Left ventricle myocardium superior (tissue), 1 donor: ENCODE measurements at regions of chr11 and their contacts with region 1.

Region 1: DNA sequence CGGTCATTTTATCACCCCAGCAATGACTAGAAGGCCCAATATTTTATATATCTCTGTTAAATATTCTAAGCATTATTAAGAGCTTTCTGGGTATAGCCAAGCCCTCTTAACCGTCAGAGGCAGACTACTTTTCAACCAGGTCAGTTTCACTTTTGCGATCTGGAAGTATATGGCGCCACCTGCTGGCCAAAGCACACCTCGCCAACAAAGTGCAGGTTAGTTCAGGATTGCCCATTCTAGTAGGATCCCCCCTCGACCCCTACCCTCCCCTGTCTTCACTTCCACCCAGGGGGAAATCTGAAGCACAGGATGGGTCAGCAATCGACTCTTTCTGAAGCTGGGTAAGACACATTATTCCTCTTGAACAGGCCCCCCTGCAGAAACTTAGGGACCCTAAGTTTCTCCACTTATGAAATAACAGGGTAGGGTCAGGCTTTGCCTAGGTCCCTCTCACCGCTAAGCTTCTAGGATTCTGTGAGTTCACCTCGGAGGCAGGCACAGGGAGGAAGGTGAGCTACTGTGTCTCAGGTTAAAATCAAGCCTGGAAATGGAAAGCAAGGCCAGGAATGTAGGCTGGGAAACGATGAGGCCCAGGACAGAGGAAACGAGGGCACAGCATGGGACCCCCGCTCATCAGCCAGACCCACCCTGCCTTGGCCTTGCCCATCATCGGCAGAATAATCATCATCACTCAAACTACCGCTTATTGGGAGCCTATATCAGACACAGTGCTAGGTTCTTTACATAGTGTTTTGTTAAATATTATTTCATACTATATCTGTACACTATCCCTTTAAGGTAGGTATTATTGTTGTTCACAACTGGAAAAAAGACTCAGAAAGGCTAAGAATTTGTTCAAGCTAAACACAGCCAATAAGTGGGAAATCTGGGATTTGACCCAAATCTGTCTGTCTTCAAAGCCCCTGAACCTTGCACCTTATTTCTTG is 35.6 kb downstream of the KCNJ1 start:
- DNase-seq: peak; percentile 87
- ATAC-seq: peak; percentile 84

Region 2: DNA sequence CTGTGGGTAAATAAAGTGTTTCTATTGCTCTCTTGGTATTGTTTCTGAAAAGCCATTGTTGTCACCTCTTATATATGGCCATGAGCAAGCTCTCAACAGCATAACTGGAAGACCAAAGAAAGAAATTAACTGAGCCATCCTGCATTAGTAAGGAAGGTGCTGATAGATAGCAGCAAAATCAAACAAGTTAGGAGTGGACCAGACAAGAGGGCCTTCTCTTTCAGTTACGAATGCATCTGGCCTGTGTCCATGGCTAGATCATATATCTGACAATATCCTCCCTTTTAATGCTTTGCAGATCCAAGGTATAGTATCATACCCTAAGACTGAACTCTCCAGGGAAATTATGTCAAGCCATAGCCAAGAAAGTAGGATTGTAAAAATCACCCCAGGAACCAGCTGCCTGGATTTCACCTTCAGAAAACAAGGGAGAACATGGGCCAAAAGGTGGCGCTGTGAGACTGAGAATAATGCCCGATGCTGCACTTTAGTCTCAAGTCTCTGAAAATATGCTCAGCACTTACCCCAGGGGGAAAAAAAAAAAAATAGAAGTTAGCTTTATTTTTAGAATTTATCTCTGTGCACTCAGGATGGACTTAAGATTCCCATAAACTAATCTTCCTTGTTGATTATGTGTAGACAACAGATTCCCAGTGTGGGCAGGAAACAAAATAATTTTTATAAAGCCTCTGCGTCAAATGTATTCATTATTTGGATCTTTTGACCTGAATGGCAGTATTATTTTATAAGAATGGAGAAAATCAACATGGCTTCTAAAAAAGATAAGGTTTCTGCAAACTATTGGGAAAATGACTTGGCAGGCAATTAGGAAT is 659.2 kb before region 1 on chr11:
- intact Hi-C with region 1: loop called (anchors 10 kb)
- DNase-seq: peak; percentile 81
- ATAC-seq: peak; percentile 77

Region 3: DNA sequence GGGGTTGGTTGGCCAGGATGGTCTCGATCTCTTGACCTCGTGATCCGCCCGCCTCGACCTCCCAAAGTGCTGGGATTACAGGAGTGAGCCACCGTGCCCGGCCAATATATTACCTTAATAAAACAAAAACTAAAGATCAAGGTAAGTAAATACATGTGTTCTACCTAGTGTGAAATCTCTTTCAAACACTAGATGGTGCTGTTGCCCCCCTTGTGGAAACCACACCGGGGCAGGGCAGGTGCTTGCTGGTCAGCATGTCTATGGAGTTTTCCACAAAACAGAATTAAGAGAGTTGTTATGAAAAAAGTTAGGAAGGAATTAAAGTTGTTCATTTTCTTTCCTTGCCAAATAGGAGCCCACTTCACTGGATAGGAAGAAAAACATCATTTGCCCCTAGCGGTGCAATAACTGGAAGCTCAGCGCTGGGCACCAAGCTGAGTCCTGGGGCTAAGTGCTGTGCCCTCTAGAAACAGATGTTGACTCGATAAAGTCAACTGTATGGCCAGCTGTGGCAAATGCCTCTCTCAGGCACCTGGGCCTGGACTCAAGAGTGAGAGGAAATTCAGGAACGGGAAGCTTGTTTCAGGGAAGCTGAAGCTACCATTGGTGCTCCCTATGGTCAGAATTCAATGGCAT is 53.4 kb after region 1 on chr11:
- intact Hi-C with region 1: no loop called
- DNase-seq: peak; percentile 53
- ATAC-seq: peak; percentile 83